Heart left ventricle (tissue), 16 donors: ENCODE measurements at regions of chr18 and their contacts with region 1.

Region 1: DNA sequence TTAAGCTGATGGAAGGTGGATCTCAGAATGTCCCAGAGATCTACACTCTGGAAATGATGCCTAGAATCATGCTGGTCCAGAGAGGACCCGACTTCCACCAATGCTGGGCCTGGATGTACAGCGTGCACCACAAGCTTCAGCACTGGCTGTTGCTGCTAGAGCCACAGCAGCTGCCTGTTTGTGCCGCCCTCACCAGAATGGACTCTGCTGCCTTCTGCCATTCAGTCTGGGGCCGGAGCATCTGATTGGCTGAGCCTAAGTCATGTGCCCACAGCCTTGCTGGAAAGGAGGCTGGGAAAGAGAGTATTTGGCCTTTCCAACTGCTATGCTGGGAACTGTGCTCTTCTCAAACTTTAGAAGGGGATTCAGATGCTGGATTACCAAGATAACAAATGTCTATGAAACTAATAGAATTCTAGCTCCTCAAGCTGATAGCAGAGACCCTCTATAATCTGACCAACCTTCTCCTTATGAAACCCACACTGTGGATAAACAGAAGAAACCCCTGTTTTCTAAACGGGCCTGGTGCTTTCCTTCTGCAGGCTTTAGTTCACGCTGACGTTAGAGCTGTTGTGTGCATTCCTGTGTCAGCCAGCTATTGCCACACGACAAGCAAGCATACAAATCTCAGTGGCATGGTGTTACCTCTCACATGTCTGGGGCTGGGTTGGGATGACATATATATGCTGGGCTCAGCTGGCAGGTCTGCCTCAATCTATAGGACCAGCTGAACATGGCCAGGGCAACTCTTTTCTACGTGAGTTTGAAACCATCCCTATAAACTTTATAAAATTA is 4.1 kb upstream of the LOXHD1 start:
- DNase-seq: no peak
- ATAC-seq: peak in 2 of 4 donors; percentile 32 to 36
- H3K4me3 ChIP-seq: no peak overlapping the region
- H3K27ac ChIP-seq: no peak overlapping the region
- H3K4me1 ChIP-seq: no peaks in the 10 kb centered on the region
- H3K27me3 ChIP-seq: peaks cover 0 to under 1% (median 0%) of the 10 kb centered on the region in 9 donors
- CTCF ChIP-seq: no peak
- POLR2A ChIP-seq: no peak

Region 2: DNA sequence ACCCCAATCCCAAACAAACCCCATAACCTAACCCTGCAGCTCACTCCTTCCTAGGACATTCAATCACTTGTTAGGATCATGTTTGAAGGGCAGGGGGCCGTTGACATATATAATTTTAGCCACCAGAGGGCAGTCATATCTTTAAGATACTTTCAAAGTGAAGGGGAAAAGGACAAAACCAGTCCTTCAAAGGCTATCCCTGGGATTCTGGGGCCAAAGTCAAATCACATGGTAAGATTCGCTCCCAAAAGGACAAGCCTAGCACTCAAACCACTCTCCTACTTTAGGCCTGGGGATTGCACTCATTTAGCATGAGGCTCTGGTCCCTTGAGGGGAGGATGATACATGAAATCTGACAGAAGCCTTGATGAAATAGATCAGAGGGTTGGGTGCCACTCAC is 512.3 kb before region 1 on chr18:
- intact Hi-C with region 1: loop called in 8 of 10 experiments (anchors 2 to 10 kb)
- DNase-seq: no peak
- ATAC-seq: peak in 3 of 4 donors; percentile 40 to 49 (median 49)
- H3K4me3 ChIP-seq: no peak overlapping the region
- H3K27ac ChIP-seq: no peak overlapping the region
- H3K4me1 ChIP-seq: peaks cover 0 to 11% (median 0%) of the 10 kb centered on the region in 12 donors
- H3K27me3 ChIP-seq: no peaks in the 10 kb centered on the region
- CTCF ChIP-seq: peak; percentile 55 to 74 (median 70)
- POLR2A ChIP-seq: no peak

Region 3: DNA sequence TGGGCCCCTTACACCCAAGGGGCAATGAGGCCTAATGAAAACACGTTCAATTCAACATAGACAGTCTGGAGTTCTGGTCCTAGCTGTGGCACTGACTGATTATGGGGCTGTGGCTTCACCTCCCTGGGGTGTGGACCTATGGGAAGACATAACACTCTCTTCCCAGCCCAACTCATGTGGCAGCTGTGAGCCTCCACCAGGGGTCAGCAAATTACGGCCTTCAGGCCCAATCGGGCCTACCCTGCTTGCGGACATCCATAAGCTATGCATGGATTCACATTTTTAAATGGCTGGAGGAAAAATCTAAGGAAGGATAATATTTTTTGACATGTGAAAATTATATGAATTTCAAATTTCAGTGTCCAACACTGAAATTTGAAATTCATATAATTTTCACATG is 105.4 kb before region 1 on chr18:
- intact Hi-C with region 1: loop called (anchors 1 to 5 kb)
- DNase-seq: peak in 3 of 5 donors; percentile 27 to 55 (median 50)
- ATAC-seq: peak in 3 of 4 donors; percentile 73 to 86 (median 76)
- H3K4me3 ChIP-seq: no peak overlapping the region
- H3K27ac ChIP-seq: no peak overlapping the region
- H3K4me1 ChIP-seq: no peaks in the 10 kb centered on the region
- H3K27me3 ChIP-seq: no peaks in the 10 kb centered on the region
- CTCF ChIP-seq: peak; percentile 40 to 67 (median 58)
- POLR2A ChIP-seq: no peak

Region 4: DNA sequence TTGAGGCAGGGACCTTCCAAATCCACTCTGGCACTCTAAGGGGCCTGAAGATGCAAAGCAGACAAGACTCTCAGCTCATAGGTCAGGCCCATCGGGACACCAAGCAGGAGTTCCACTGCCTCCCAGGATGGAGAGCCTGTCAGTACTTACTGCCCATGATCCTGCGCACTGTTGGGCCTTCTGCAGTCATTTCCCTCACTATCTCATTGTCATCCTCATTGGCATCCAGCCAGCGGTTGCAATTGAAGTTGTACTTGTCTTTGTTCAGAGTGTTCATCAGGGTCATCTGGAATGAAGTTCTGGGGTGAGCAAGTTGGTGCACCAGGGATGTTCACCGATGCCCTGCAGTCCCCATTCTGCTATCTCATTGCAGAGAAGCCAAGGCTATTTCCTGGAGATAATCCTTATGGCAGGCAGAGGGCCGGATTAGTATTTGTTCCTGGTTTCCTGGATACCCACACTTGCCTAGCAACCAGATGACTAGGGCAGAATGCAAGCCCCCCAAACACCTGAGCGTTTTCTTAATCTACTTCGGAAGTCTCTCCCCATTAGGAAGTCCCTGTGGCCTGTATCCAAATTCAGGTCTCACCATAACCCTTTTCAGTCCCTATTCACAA is 69.3 kb before region 1 on chr18:
- intact Hi-C with region 1: no loop called
- DNase-seq: no peak
- ATAC-seq: peak in 1 of 4 donors; percentile 53
- H3K4me3 ChIP-seq: no peak overlapping the region
- H3K27ac ChIP-seq: no peak overlapping the region
- H3K4me1 ChIP-seq: peaks cover 0 to 19% (median 1%) of the 10 kb centered on the region in 12 donors
- H3K27me3 ChIP-seq: no peaks in the 10 kb centered on the region
- CTCF ChIP-seq: no peak
- POLR2A ChIP-seq: no peak